ENCODE measurements at regions of chr16 and their contacts with region 1.

Region 1: DNA sequence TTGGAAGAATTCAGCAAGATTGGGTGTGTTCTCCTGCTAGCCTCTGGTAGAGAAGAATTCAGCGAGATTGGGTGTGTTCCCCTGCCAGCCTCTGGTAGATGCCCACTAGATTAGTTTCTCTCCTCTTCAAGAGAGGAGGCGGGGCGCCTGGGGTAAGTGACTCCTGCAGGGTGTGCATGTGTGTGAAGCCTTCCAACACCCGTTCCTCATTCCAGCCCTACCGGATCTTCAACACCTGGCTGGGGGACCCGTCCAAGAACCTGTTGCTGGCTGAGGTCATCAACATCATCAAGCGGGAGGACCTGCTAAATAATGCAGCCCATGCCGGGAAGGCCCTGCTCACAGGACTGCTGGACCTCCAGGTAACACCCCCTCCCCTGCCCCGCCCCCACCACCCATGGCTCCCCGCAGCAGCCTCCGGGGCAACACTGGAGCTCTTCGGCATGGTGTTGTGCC is 21.3 kb downstream of the TMEM186 start:
- DNase-seq: no peak
- H3K4me3 ChIP-seq: no peak overlapping the region
- H3K27ac ChIP-seq: no peak overlapping the region
- H3K4me1 ChIP-seq: peaks cover 0 to 1% (median 0%) of the 10 kb centered on the region in 4 experiments; a peak in 1 of 7 replicates
- H3K27me3 ChIP-seq: no peaks in the 10 kb centered on the region; a peak in 1 of 7 replicates
- CTCF ChIP-seq: no peak
- EP300 ChIP-seq: no peak
- POLR2A ChIP-seq: no peak
- RAD21 ChIP-seq: no peak

Region 2: DNA sequence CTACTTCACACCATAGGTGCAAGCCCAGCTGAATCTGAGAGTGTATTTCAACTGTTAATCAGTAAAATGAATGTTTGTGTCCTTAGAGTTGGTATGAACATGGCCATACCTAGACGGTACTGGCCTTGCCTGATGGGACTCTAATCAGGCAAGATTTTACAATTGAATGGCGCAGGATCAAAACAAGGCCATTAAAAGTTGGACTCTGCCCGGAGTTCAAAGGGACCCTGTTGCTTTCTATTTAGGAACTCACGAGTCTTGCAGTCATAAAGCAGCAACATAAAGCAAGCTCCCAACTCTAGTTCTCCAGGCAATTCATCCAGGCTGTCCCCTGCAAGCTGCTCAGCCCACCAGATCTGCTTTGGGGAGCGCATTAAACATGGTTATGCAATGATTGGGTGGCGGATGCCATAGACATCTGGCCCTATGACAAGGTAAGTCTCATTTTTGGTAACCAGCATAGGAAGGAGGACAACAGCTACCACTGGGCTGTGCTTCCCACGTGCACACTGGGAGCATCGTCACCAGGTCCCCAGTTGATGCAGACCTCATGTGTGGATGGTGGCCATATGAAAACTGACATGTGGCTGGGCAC is 12.5 kb after region 1 on chr16:
- CTCF ChIA-PET with region 1: interaction called, 22 read pairs
- POLR2A ChIA-PET with region 1: interaction called, 3 read pairs
- DNase-seq: no peak
- H3K4me3 ChIP-seq: no peak overlapping the region
- H3K27ac ChIP-seq: no peak overlapping the region
- H3K4me1 ChIP-seq: no peaks in the 10 kb centered on the region; a peak in 1 of 7 replicates
- H3K27me3 ChIP-seq: no peaks in the 10 kb centered on the region
- CTCF ChIP-seq: no peak
- EP300 ChIP-seq: no peak
- POLR2A ChIP-seq: no peak
- RAD21 ChIP-seq: no peak

Region 3: DNA sequence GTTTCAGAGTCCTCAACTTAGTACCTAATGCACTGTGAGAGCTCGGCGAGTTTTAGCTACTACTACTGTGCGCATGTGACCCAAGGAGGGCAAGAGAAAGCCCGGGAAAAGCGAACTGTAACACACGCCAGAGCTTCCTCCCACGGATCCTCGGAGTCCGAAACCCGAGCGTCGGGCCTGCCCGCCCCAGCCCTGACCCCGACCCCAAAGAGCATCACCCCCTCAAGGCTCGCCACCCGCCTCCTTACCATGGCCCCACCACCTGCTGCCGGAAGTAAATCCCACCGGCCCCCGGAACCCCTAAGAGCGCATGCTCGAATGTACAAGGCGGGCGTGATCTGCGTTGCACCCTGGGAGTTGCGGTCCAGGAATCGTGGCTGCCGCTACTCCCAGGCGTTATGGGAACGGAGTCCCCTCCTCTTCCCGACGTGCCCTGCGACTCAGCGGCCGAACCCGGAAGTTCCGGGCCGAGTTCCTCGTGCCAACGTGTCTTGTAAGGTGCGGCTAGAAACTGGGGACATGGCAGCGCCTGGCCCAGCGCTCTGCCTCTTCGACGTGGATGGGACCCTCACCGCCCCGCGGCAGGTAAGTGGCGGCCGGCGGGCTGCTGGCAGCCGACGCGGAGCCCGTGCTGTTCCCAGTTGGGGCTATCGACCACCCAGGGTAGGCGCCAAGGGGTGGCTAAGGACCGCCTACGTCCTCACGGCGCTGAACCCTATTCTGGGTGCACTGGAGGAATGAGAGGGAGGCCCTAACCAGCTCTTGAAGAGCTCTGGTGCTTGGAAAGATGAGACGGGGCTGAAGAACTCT is 21.4 kb after region 1 on chr16 and contains the starts of genes PMM2 and TMEM186:
- CTCF ChIA-PET with region 1: interaction called, 22 read pairs
- POLR2A ChIA-PET with region 1: interaction called, 3 read pairs
- DNase-seq: peak; percentile 92 to 94
- H3K4me3 ChIP-seq: peak within 1 kb of the TSS; percentile 61 to 85 (median 77)
- H3K27ac ChIP-seq: peak within 1 kb of the TSS; percentile 64
- H3K4me1 ChIP-seq: peaks cover 0 to 13% (median 2%) of the 10 kb centered on the region in 4 experiments; a peak in 3 of 7 replicates
- H3K27me3 ChIP-seq: no peaks in the 10 kb centered on the region
- CTCF ChIP-seq: no peak
- EP300 ChIP-seq: no peak
- POLR2A ChIP-seq: peak in 1 of 2 experiments; percentile 76; a peak in 2 of 3 replicates
- RAD21 ChIP-seq: no peak
- total RNA-seq, gene PMM2: 47.0 and 49.4 TPM in 2 replicates
- total RNA-seq, gene TMEM186: 13.1 and 14.3 TPM in 2 replicates